Dorsolateral prefrontal cortex (tissue), 120 donors: ENCODE measurements at regions of chr13 and their contacts with region 1.

Region 1: GRCh38 chr13:26946684-26947343 is 186.2 kb upstream of the GPR12 start:
- DNase-seq: no peak
- H3K4me3 ChIP-seq: no peak overlapping the region
- H3K27ac ChIP-seq: no peak overlapping the region
- H3K27me3 ChIP-seq: no peaks in the 10 kb centered on the region
- CTCF ChIP-seq: peak in 55 of 56 donors; percentile 36 to 81 (median 63)

Region 2: DNA sequence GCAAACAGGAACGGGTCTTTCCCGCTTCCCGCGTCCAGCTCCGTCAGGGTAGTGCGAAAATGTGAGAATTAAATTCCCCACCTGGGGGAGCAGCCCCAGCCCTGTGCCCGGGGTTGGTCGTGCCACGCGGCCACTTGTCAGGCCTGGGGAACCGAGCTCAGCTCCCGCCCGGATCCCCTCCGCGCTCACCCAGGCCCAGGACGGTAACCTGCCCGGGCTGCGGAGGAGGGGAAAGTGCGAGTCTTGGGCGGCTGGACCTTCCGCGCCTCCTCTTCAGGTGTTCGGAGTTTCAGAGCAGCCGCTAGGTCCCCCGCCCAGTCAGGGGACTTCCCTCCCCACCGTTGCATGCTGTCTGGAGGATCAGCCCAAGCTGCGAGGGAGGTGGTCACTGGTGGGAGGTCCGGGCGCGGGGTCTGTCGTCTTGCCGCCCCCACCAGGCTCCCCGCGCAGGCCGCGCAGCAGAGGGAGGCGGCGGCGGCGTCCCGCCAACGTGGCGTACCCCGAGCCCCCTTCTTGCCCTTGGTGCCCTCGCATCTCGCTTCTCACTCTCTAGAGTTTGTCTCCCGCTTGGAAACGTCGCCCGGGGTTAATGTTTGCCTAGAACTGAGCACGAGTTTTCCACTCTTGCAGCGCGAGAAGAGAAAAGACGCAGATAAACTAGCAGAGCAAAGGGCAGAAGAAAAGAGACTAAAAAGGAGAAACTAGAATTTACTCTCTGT is 1033.6 kb after region 1 on chr13:
- intact Hi-C with region 1: loop called in 1 of 2 experiments (anchors 10 kb)
- DNase-seq: peak in 1 of 10 donors; percentile 33
- H3K4me3 ChIP-seq: peak overlapping the region in 2 of 59 donors; percentile 4 to 23
- H3K27ac ChIP-seq: no peak overlapping the region
- H3K27me3 ChIP-seq: peaks cover 35 to 97% (median 86%) of the 10 kb centered on the region in 45 donors
- CTCF ChIP-seq: no peak